ENCODE measurements at regions of chr6 and their contacts with region 1.

Region 1: GRCh38 chr6:107866606-107867301 is 42.6 kb upstream of the SCML4 start:
- DNase-seq: peak; percentile 51
- ATAC-seq: peak; percentile 61
- H3K4me3 Mint-ChIP-seq: no peak overlapping the region
- H3K27ac Mint-ChIP-seq: peak overlapping the region; percentile 5
- H3K4me1 Mint-ChIP-seq: peaks cover 4% of the 10 kb centered on the region
- H3K27me3 Mint-ChIP-seq: no peaks in the 10 kb centered on the region

Region 2: GRCh38 chr6:107712665-107713551 is 153.8 kb before region 1 on chr6:
- CTCF ChIA-PET with region 1: interaction called, 15 read pairs
- DNase-seq: peak; percentile 59
- ATAC-seq: peak; percentile 58
- H3K4me3 Mint-ChIP-seq: peak overlapping the region; percentile 67
- H3K27ac Mint-ChIP-seq: peak overlapping the region; percentile 84
- H3K4me1 Mint-ChIP-seq: peaks cover 51% of the 10 kb centered on the region
- H3K27me3 Mint-ChIP-seq: no peaks in the 10 kb centered on the region

Region 3: DNA sequence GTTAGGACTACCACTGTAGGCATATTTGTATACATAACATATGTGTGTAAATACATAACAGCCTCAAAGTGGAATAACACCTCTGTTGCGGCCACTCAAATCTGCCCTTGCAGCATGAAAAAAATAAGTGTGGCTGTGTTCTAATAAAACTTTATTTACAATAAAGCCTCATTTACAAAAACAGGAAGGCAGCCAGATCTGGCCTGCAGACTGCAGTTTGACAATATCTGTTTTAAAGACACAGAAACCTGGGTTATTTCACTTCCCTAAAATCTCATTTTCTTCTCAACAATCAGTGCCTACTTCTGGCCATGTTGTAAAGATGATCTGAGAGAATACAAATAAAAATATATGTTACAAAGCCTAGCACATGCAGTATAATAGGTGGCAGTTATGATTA is 11.2 kb after region 1 on chr6:
- CTCF ChIA-PET with region 1: interaction called, 10 read pairs
- DNase-seq: no peak
- ATAC-seq: no peak
- H3K4me3 Mint-ChIP-seq: no peak overlapping the region
- H3K27ac Mint-ChIP-seq: no peak overlapping the region
- H3K4me1 Mint-ChIP-seq: no peaks in the 10 kb centered on the region
- H3K27me3 Mint-ChIP-seq: no peaks in the 10 kb centered on the region

Measured in activated CD8-positive, alpha-beta memory T cell treated with anti-CD3 and anti-CD28 coated beads, Interleukin-2, amount 10 ng/mL, durations not matched to agents 7 days and 5 days (primary cell).